Sigmoid colon (tissue), 7 donors: ENCODE measurements at regions of chr16 and their contacts with region 1.

Region 1: GRCh38 chr16:67816240-67817031 is 9.7 kb downstream of the TSNAXIP1 start:
- DNase-seq: peak; percentile 94
- H3K4me3 ChIP-seq: no peak overlapping the region
- H3K27ac ChIP-seq: peak overlapping the region in 3 of 4 donors; percentile 35 to 57 (median 56)
- H3K4me1 ChIP-seq: peaks cover 0 to 5% (median 4%) of the 10 kb centered on the region in 4 donors
- H3K27me3 ChIP-seq: no peaks in the 10 kb centered on the region
- CTCF ChIP-seq: peak; percentile 99 to 100 (median 99)
- EP300 ChIP-seq: no peak
- POLR2A ChIP-seq: no peak

Region 2: DNA sequence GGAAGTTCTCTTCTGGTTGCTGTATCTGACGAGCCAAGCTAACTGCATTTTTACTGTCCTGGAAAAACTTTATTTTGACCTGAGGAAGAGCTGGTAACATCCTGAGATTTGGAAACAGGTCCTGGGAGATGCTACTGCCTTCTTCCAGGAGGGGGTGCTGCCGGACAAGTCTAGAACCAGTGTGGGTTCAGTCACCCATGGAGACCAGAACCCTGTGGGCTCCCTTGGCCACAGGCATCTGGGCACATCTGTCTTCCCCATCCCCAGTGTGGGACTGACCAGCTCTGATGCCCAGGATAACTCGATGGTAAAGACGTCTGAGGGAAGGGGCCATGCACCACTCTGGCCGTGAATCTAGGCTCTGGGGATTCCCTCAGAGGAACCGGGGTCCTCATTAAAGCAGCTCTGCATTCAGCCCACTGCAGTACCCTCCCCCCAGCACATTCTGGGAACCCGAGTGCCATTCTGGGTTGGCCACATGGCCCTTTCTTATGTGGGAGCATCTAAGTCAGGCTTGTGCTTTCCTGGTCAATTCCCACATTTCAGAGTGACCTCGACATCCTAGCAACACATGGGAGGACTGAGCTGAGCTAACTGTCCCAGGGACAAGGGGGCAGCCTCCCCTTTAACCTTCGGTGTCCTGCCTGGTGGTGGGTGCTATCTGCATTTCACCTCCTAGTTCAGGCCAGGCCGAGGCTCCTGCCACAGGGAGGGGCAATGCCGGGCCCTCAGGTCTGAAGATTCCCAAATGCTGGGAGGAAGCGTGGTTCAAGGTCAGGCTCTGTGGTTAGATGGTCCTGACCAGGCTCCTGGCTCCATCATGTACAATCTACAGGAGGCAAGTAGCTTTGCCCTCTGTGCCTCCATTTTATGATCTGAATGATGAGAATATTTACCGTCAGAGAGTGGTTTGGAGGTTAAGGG is 143.4 kb before region 1 on chr16:
- intact Hi-C with region 1: loop called (anchors 5 kb)
- DNase-seq: peak; percentile 83
- H3K4me3 ChIP-seq: no peak overlapping the region
- H3K27ac ChIP-seq: peak overlapping the region; percentile 58 to 72 (median 70)
- H3K4me1 ChIP-seq: peaks cover 0 to 27% (median 24%) of the 10 kb centered on the region in 4 donors
- H3K27me3 ChIP-seq: no peaks in the 10 kb centered on the region
- CTCF ChIP-seq: peak in 3 of 4 experiments; percentile 57 to 74 (median 66)
- EP300 ChIP-seq: no peak
- POLR2A ChIP-seq: no peak

Region 3: GRCh38 chr16:67928561-67929364 is 112.3 kb after region 1 on chr16:
- intact Hi-C with region 1: loop called (anchors 5 kb)
- DNase-seq: peak; percentile 84
- H3K4me3 ChIP-seq: no peak overlapping the region
- H3K27ac ChIP-seq: no peak overlapping the region
- H3K4me1 ChIP-seq: peaks cover 0 to 15% (median 10%) of the 10 kb centered on the region in 4 donors
- H3K27me3 ChIP-seq: no peaks in the 10 kb centered on the region
- CTCF ChIP-seq: peak; percentile 53 to 76 (median 68)
- EP300 ChIP-seq: no peak
- POLR2A ChIP-seq: no peak

Region 4: GRCh38 chr16:68040507-68041288 is 224.3 kb after region 1 on chr16:
- intact Hi-C with region 1: loop called (anchors 1 kb)
- DNase-seq: peak; percentile 88
- H3K4me3 ChIP-seq: no peak overlapping the region
- H3K27ac ChIP-seq: no peak overlapping the region
- H3K4me1 ChIP-seq: no peaks in the 10 kb centered on the region
- H3K27me3 ChIP-seq: no peaks in the 10 kb centered on the region
- CTCF ChIP-seq: peak; percentile 48 to 80 (median 76)
- EP300 ChIP-seq: no peak
- POLR2A ChIP-seq: no peak

Region 5: GRCh38 chr16:68229431-68230198 is 413.2 kb after region 1 on chr16:
- intact Hi-C with region 1: loop called (anchors 10 kb)
- DNase-seq: peak; percentile 70
- H3K4me3 ChIP-seq: no peak overlapping the region
- H3K27ac ChIP-seq: peak overlapping the region in 1 of 4 donors; percentile 35
- H3K4me1 ChIP-seq: peaks cover 0 to 11% (median 4%) of the 10 kb centered on the region in 4 donors
- H3K27me3 ChIP-seq: no peaks in the 10 kb centered on the region
- CTCF ChIP-seq: peak; percentile 70 to 87 (median 78)
- EP300 ChIP-seq: no peak
- POLR2A ChIP-seq: no peak